ENCODE measurements at regions of chr18 and their contacts with region 1.

Region 1: DNA sequence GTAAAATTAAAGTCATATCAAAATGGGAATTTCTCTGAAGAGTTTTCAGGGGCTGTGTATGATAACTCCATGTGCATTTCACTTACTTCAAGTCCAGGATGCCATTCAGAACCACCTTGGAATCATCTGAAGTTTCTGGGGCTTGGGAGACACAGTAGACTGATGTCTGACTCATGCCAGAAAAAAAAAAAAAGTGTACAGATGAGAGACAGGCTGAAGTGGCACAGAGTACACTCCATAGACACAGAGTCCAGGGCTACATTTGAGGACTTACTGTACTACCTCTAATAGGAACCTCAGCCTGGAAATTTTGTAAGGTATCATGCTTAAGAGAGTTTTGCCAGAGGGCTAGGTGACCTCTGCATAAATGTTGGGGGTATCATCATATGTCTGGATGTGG is 92.0 kb downstream of the SS18 start:
- DNase-seq: no peak
- ATAC-seq: no peak
- H3K4me3 ChIP-seq: no peak overlapping the region
- H3K27ac ChIP-seq: no peak overlapping the region
- H3K4me1 ChIP-seq: no peaks in the 10 kb centered on the region
- H3K27me3 ChIP-seq: no peaks in the 10 kb centered on the region
- CTCF ChIP-seq: no peak

Region 2: GRCh38 chr18:25701821-25702220 is 296.6 kb before region 1 on chr18:
- CTCF ChIA-PET with region 1: no interaction called
- POLR2A ChIA-PET with region 1: interaction called, 10 read pairs
- in situ Hi-C with region 1: no loop called
- intact Hi-C with region 1: no loop called
- DNase-seq: no peak
- ATAC-seq: no peak
- H3K4me3 ChIP-seq: no peak overlapping the region
- H3K27ac ChIP-seq: no peak overlapping the region
- H3K4me1 ChIP-seq: no peaks in the 10 kb centered on the region
- H3K27me3 ChIP-seq: no peaks in the 10 kb centered on the region
- CTCF ChIP-seq: no peak

Region 3: GRCh38 chr18:25921677-25922421 is 76.6 kb before region 1 on chr18:
- CTCF ChIA-PET with region 1: no interaction called
- POLR2A ChIA-PET with region 1: no interaction called
- in situ Hi-C with region 1: no loop called
- intact Hi-C with region 1: no loop called
- DNase-seq: peak; percentile 30
- ATAC-seq: peak; percentile 76
- H3K4me3 ChIP-seq: no peak overlapping the region
- H3K27ac ChIP-seq: no peak overlapping the region
- H3K4me1 ChIP-seq: no peaks in the 10 kb centered on the region
- H3K27me3 ChIP-seq: no peaks in the 10 kb centered on the region; the same call in 1 of the 2 replicates
- CTCF ChIP-seq: peak; percentile 83

Region 4: DNA sequence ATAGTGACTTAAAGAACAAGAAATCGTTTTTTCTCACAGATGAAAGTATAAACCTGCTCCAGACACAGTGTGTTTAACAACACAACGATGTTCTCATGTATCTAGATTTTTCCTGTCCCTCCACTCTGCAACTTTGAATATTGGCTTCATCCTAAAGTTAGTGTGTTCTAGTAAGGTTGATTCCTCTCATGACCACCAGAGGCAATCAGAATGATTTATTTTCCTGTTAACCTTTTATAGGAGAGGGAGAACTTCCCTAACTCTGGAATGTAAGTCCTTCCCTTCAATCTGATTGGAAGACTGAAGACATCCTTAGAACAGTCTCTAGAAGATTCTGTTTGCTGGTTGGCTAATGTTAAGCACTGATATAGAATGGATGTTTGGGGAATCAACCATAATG is 186.8 kb after region 1 on chr18:
- CTCF ChIA-PET with region 1: no interaction called
- POLR2A ChIA-PET with region 1: no interaction called
- in situ Hi-C with region 1: no loop called
- intact Hi-C with region 1: no loop called
- DNase-seq: no peak
- ATAC-seq: no peak
- H3K4me3 ChIP-seq: no peak overlapping the region
- H3K27ac ChIP-seq: no peak overlapping the region
- H3K4me1 ChIP-seq: no peaks in the 10 kb centered on the region
- H3K27me3 ChIP-seq: no peaks in the 10 kb centered on the region
- CTCF ChIP-seq: peak; percentile 27; the same call in 1 of the 2 replicates

Measured in Panc1 (cell line).